AG04449 (cell line): ENCODE measurements at regions of chr11 and their contacts with region 1.

Region 1: GRCh38 chr11:102933627-102934026 is 21.9 kb downstream of the MMP13 start:
- DNase-seq: no peak
- H3K4me3 ChIP-seq: no peak overlapping the region
- CTCF ChIP-seq: no peak

Region 2: DNA sequence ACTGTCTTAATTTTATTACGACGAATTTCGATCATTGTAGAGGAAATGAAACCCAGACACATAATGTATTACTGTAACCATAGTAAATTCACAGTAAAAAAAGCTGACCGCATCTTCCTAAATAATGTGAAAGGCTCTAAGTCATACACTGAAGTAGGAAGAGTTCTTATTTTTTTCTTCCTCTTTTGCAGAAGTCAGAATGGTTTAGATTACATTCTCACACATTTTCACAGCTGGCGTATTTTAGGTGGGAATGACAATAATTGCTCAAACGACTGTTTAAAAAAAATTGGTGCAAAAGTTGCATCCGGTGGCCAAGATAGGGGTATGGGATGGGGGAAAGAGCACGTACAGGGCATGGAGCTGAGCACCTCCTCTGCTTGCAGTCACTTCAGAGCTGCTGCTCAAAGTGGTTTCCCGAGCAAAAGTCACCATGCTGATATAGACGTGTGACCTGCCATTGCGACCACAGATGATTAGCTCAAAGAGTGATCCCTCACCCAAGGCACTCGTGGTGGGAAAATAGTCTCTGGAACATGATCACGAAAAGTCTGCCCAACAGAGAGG is 13.4 kb before region 1 on chr11:
- CTCF ChIA-PET with region 1: interaction called, 95 read pairs
- POLR2A ChIA-PET with region 1: no interaction called
- DNase-seq: no peak
- H3K4me3 ChIP-seq: no peak overlapping the region
- CTCF ChIP-seq: no peak